Posterior cingulate gyrus (tissue), 11 donors: ENCODE measurements at regions of chr10 and their contacts with region 1.

Region 1: GRCh38 chr10:110067960-110068770 is 60.4 kb downstream of the ADD3 start:
- DNase-seq: no peak

Region 2: DNA sequence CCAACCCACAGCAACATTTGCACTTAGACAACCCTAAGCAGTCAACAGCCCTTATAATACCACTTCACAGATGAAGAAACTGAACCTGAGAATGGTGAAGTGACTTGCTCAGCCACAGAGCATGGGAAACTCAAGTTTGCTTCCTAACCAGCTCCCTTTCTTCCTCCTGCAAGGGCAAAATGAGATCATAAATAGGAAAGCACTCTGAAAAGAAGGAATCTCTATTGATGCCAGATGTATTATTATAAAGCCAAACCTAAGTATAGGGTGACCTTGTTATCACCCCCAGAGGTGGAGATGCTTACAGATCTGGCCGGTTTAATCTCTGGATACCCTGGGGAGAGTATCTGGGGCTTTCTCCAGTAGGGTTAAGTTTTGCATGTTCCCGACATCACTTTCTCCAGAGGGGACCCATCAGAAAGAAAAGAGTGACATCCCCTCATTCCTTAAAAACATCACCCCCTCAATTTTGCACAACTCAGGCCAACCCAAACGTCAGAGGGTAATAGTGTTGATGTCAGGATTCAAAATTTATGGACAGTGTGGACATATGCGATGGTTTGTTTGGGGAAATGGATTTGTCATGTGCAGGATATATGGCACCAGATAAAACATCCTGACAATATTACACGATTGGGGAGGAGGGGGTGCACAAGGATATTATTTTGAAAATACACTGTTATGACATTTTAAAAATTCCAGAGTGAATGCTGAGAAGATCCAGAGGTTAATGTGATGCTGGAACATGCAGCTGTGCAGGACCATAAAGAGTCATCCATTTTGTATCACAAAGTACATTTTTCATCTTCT is 120.8 kb before region 1 on chr10:
- intact Hi-C with region 1: no loop called
- DNase-seq: no peak

Region 3: DNA sequence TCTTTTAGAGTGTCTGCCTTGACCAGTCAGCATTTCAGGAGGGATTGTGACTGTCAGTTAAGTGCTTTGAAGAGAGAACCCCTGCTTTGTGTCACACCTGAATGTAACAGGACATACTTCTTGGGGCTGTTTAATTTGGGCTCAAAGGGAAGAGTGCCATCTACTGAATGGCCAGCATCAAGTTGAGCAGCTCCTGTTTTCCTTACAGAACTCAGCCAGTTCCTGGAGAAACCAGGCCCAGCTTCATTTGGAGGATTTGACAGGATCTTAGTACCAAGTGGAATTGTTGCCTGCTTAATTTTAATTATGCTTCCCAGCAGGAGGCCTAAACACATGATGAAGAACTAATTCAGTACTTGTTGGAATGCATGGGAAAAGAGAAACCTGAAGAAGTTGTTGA is 52.1 kb before region 1 on chr10:
- intact Hi-C with region 1: loop called (anchors 10 kb)
- DNase-seq: peak in 1 of 10 donors; percentile 11

Region 4: DNA sequence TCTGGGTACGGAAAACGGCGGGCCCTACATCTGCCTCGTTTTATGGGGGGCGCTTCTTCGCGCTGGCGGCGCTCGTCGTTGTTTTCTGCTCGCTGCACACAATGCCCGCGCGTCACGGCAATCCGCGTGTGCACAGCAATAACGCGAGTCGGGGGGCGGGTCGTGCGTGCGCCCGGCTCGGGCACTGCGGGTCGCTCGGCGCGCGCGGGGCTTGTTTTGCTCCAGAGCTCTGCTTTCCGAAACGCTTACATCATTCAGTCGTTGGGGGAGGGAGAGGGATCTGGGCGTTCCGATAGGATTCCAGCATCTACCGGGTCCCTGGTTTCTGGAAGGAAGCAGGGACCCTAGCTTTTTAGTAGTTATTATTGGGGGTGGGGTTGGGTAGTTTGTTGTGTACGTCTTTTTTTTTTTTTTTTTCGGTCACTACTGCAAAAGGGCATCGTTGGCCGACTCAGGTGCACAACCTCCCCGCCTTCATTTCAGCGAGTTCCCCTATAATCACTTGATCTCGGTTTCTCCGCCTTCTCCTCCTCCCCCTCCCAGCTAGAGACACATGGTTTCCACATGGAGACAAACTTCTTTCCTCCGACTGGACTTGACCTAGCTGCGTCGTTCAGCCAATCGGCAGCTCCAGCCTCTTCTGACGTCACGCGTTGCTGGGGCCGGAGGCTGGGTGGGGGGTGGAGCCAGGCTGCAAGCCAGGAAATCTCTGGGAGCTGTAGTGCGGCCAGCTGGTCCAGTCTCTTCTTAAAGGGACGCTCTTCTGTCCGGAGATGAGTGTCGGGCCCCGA is 142.7 kb after region 1 on chr10:
- intact Hi-C with region 1: no loop called
- DNase-seq: peak; percentile 98 to 100 (median 99)